Panc1 (cell line): ENCODE measurements at regions of chr11 and their contacts with region 1.

Region 1: GRCh38 chr11:6285019-6285418 is 25.4 kb downstream of the CCKBR start:
- DNase-seq: no peak
- ATAC-seq: no peak
- H3K4me3 ChIP-seq: no peak overlapping the region
- H3K27ac ChIP-seq: no peak overlapping the region
- H3K4me1 ChIP-seq: no peaks in the 10 kb centered on the region
- H3K27me3 ChIP-seq: peaks cover 29% of the 10 kb centered on the region
- CTCF ChIP-seq: no peak

Region 2: DNA sequence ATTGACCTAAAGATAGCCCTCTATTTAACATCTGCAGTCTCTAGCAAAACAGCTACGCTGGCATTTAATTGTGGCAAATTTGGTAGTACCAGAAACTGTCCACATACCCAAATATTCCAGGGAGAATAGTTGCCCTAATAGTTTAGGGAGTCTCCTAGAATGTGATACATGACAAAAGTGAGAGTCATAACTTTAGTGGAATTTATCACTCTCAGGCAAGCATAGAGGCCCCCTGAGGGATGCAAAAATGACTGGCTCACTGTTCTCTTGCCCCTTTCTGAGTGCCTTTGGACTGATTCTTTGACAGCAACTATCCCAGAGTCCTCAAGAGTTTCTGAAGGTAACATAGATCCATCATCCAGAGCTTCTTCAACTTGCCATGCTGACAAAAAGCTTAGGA is 981.0 kb before region 1 on chr11:
- CTCF ChIA-PET with region 1: interaction called, 14 read pairs
- POLR2A ChIA-PET with region 1: no interaction called
- in situ Hi-C with region 1: no loop called
- intact Hi-C with region 1: no loop called
- DNase-seq: no peak
- ATAC-seq: no peak
- H3K4me3 ChIP-seq: no peak overlapping the region
- H3K27ac ChIP-seq: no peak overlapping the region
- H3K4me1 ChIP-seq: no peaks in the 10 kb centered on the region
- H3K27me3 ChIP-seq: no peaks in the 10 kb centered on the region
- CTCF ChIP-seq: no peak

Region 3: DNA sequence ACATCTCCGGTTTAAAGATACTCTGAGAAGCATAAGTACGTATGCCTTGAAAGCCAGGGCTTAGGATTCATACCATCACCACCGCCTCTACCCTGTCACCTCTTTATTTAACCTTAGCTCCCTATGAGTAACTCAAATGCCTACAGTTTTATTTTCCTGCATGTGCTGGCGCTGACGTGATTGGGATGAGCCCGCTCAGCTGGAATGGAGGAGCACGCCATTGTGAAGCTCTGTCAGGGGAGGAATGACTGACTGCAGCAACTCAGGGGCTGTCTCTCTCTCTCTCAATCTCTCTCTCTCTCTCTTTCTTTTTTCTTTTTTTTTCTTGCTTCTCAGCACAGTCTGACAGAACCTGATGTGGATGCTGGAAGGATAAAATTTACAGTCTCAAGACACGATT is 22.9 kb after region 1 on chr11:
- CTCF ChIA-PET with region 1: interaction called, 10 read pairs
- POLR2A ChIA-PET with region 1: interaction called, 3 read pairs
- in situ Hi-C with region 1: no loop called
- intact Hi-C with region 1: no loop called
- DNase-seq: no peak
- ATAC-seq: peak; percentile 48; the same call in 1 of the 2 replicates
- H3K4me3 ChIP-seq: no peak overlapping the region
- H3K27ac ChIP-seq: no peak overlapping the region
- H3K4me1 ChIP-seq: no peaks in the 10 kb centered on the region
- H3K27me3 ChIP-seq: peaks cover 38% of the 10 kb centered on the region
- CTCF ChIP-seq: no peak

Region 4: GRCh38 chr11:6419009-6419631 is 134.1 kb after region 1 on chr11 and contains the start of gene APBB1:
- CTCF ChIA-PET with region 1: no interaction called
- POLR2A ChIA-PET with region 1: no interaction called
- in situ Hi-C with region 1: no loop called
- intact Hi-C with region 1: no loop called
- DNase-seq: no peak
- ATAC-seq: peak; percentile 86
- H3K4me3 ChIP-seq: peak within 1 kb of the TSS; percentile 59 to 62
- H3K27ac ChIP-seq: no peak within 1 kb of the TSS
- H3K4me1 ChIP-seq: peaks cover 4% of the 10 kb centered on the region
- H3K27me3 ChIP-seq: peaks cover 45% of the 10 kb centered on the region
- CTCF ChIP-seq: no peak; the same call in 1 of the 2 replicates
- total RNA-seq, gene APBB1: 9.6 TPM

Region 5: GRCh38 chr11:6505577-6506240 is 220.7 kb after region 1 on chr11:
- CTCF ChIA-PET with region 1: no interaction called
- POLR2A ChIA-PET with region 1: no interaction called
- in situ Hi-C with region 1: no loop called
- intact Hi-C with region 1: no loop called
- DNase-seq: peak; percentile 64
- ATAC-seq: peak; percentile 88
- H3K4me3 ChIP-seq: no peak overlapping the region
- H3K27ac ChIP-seq: no peak overlapping the region
- H3K4me1 ChIP-seq: no peaks in the 10 kb centered on the region
- H3K27me3 ChIP-seq: no peaks in the 10 kb centered on the region
- CTCF ChIP-seq: peak; percentile 91